Dendritic cell treated with granulocyte-macrophage colony-stimulating factor and Interleukin-4, amounts not matched to agents 40 ng/mL and 50 ng/mL, for 4 days (primary cell): ENCODE measurements at regions of chrX and their contacts with region 1.

Region 1: DNA sequence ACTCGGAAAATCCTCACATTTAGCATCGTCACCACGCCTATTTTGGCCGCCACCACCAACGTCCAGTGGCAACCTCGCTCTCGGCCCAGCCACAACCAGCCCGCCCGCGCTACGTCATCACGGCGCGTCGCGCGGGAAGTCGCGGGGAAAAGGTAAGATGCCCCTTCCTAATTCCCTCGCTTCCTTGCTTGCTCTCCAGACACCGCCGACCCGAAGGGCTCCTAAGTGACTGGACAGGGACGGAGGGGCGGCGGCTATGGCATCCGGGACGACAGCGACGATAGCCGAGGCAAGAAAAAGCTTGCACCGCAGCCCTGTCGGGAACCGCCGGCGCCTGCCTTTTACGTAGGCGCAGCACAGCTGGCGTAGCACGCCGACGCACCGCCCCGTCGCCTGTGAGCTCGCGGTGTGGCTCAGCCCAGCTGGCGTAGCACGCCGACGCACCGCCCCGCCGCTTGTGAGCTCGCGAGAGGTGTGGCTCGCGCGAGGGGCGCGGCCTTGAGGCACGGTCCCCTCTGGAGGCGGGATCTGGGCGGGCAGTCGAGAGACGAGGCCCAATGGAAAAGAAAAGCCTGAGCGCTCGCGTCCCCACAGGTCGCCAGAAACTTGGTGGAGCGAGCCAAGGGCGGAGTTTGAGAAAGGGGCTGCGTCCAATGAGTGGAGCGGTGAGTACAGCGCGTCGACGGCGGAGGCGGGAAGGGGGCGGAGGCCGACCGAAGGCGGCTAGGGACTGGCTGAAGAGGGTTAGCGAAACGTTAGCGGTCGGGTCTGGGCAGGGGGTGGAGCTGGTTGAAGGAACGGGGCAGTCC is at the start of gene HDAC6:
- H3K4me3 Mint-ChIP-seq: peak within 1 kb of the TSS; percentile 88
- H3K27ac Mint-ChIP-seq: peak within 1 kb of the TSS; percentile 98
- H3K4me1 Mint-ChIP-seq: peaks cover 23% of the 10 kb centered on the region
- H3K27me3 Mint-ChIP-seq: no peaks in the 10 kb centered on the region

Region 2: DNA sequence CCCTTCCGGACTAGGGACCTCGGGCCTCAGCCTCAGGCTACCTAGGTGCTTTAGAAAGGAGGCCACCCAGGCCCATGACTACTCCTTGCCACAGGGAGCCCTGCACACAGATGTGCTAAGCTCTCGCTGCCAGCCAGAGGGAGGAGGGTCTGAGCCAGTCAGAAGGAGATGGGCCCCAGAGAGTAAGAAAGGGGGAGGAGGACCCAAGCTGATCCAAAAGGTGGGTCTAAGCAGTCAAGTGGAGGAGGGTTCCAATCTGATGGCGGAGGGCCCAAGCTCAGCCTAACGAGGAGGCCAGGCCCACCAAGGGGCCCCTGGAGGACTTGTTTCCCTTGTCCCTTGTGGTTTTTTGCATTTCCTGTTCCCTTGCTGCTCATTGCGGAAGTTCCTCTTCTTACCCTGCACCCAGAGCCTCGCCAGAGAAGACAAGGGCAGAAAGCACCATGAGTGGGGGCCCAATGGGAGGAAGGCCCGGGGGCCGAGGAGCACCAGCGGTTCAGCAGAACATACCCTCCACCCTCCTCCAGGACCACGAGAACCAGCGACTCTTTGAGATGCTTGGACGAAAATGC is 118.0 kb before region 1 on chrX and contains the start of gene WAS:
- intact Hi-C with region 1: loop called (anchors 5 kb)
- H3K4me3 Mint-ChIP-seq: peak within 1 kb of the TSS; percentile 99
- H3K27ac Mint-ChIP-seq: peak within 1 kb of the TSS; percentile 99
- H3K4me1 Mint-ChIP-seq: peaks cover 80% of the 10 kb centered on the region
- H3K27me3 Mint-ChIP-seq: no peaks in the 10 kb centered on the region

Region 3: GRCh38 chrX:48696301-48697181 is 104.9 kb before region 1 on chrX and contains the start of gene SUV39H1:
- intact Hi-C with region 1: loop called (anchors 5 kb)
- H3K4me3 Mint-ChIP-seq: peak within 1 kb of the TSS; percentile 86
- H3K27ac Mint-ChIP-seq: peak within 1 kb of the TSS; percentile 97
- H3K4me1 Mint-ChIP-seq: peaks cover 31% of the 10 kb centered on the region
- H3K27me3 Mint-ChIP-seq: no peaks in the 10 kb centered on the region

Region 4: GRCh38 chrX:48737213-48737938 is 64.1 kb before region 1 on chrX:
- intact Hi-C with region 1: loop called (anchors 2 kb)
- H3K4me3 Mint-ChIP-seq: peak overlapping the region; percentile 89
- H3K27ac Mint-ChIP-seq: peak overlapping the region; percentile 98
- H3K4me1 Mint-ChIP-seq: peaks cover 13% of the 10 kb centered on the region
- H3K27me3 Mint-ChIP-seq: no peaks in the 10 kb centered on the region

Region 5: DNA sequence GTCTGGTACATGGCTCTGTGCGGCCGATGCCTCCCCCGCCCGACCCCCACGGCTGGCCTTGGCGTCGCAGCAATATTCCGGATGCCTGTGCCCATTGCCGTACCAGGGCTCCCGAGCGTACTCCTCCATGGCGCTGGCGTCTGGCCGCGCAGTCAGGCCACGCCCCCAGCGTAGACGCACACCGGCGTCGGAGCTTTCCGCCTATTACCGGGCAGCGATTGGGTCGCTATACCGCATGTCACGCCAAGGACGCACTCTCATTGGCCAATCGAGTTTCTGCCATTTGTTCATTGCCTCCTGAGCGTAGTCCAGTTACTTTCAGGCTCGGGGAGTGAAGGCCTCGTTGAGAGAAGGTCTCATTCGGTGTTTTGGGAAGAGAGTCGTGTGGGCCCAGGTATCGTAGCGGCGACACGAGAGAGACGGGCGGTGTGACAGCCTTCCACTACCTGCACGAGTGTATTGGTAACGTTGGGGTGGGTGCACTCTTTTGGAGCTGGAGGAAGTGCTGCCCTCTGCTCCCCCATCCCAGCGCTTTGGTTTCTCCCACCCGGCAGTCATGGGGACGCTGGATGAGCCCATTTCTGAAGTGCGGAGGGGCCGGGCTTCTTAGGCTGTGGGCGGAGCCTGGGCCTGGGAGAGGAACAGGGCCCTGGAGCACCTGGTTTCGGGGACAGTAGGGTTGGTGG is 96.3 kb after region 1 on chrX and contains the starts of genes PQBP1 and TIMM17B:
- intact Hi-C with region 1: loop called (anchors 5 kb)
- H3K4me3 Mint-ChIP-seq: peak within 1 kb of the TSS; percentile 84
- H3K27ac Mint-ChIP-seq: peak within 1 kb of the TSS; percentile 96
- H3K4me1 Mint-ChIP-seq: peaks cover 25% of the 10 kb centered on the region
- H3K27me3 Mint-ChIP-seq: no peaks in the 10 kb centered on the region